Breast epithelium (tissue), 4 donors: ENCODE measurements at regions of chr13 and their contacts with region 1.

Region 1: DNA sequence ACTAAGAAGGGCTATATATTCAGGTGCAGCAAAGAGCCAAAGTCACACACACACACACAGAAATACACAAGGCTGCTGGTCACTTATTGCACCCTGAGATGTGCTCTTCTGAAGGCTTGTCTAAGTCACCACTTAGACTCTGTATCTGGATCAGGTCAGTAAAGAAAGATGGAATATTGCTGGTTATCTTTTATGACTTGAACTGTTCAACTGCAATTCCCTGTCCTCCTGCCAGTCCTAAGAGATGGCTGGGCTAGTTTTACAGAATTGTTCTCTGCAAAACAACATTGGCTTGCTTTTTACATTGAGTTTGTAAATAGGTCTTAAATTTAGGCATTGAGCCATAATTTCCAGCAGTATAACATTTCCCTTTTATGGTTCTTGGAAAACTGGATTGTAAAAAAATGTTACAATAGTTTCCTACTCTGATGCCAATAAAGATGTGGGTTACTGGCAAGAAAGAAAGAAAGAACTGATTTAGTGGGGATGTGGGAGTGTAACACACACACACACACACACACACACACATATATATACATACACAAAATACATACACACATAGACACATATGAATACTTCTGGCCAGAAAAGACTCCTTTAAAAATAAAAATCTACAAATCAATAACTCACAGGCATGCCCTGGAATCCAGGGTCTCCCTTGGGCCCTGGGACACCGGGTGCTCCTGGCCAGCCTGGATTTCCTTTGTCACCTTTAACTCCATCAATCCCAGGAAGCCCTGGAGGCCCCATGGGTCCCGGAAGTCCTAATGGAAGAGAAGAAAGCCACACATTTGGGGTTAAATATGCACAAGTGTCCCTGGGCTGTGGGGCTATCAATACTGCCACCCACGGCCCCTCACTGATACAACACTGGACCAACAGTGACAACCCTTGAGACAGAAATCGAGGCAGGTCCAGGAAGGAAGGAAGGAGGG is 137.7 kb downstream of the COL4A1 start:
- DNase-seq: no peak
- H3K4me3 ChIP-seq: no peak overlapping the region
- H3K27ac ChIP-seq: peak overlapping the region in 1 of 2 donors; percentile 0
- H3K4me1 ChIP-seq: no peaks in the 10 kb centered on the region
- H3K27me3 ChIP-seq: no peaks in the 10 kb centered on the region
- CTCF ChIP-seq: no peak
- POLR2A ChIP-seq: no peak

Region 2: GRCh38 chr13:109885235-109885634 is 284.0 kb before region 1 on chr13:
- intact Hi-C with region 1: loop called (anchors 5 kb)
- DNase-seq: no peak
- H3K4me3 ChIP-seq: no peak overlapping the region
- H3K27ac ChIP-seq: no peak overlapping the region
- H3K4me1 ChIP-seq: no peaks in the 10 kb centered on the region
- H3K27me3 ChIP-seq: no peaks in the 10 kb centered on the region
- CTCF ChIP-seq: no peak
- POLR2A ChIP-seq: no peak

Region 3: DNA sequence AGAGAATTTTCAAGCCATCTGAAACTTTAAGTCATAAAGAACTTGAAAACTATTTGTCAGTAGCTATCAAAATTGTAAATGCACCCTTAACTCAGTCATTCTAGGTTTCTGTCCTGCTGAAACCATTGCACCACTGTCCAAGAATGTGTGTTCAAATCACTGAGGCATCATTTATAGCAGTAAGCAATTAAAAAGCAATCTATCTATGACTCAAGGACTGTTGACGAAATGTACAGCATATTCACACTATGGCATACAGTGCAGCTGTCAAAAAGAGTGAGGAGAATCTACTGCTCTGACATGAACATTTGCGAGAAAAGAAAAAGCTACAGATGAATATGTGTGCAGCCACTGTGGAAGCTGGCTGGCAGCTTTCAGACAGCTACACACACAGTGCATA is 615.4 kb after region 1 on chr13:
- intact Hi-C with region 1: no loop called
- DNase-seq: no peak
- H3K4me3 ChIP-seq: no peak overlapping the region
- H3K27ac ChIP-seq: no peak overlapping the region
- H3K4me1 ChIP-seq: no peaks in the 10 kb centered on the region
- H3K27me3 ChIP-seq: no peaks in the 10 kb centered on the region
- CTCF ChIP-seq: no peak
- POLR2A ChIP-seq: no peak